Transverse colon (tissue), 4 donors: ENCODE measurements at regions of chr15 and their contacts with region 1.

Region 1: DNA sequence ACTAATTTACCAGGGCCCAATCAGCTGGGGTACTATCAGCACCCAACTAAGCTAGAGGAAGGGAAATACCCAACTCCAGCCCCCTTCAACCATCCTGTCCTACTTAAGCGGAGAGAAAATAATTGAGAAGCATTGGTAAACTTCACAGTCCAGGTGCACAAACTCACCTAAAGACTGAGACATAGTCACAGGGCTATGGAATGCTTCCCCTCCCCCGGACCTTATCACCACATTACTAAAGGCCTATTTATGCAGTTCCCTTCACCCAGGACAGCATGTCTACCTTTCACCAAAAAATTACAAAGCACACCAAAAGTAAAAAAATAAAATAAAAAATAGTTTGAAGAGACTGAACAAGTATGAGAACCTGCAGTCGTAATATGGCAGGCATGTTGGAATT is 47.9 kb downstream of the HOMER2 start:
- DNase-seq: no peak
- H3K4me3 ChIP-seq: no peak overlapping the region
- H3K27ac ChIP-seq: no peak overlapping the region
- H3K4me1 ChIP-seq: no peaks in the 10 kb centered on the region
- H3K27me3 ChIP-seq: no peaks in the 10 kb centered on the region
- CTCF ChIP-seq: no peak
- EP300 ChIP-seq: no peak
- POLR2A ChIP-seq: no peak

Region 2: GRCh38 chr15:82847703-82848102 is 56.9 kb before region 1 on chr15:
- in situ Hi-C with region 1: no loop called
- intact Hi-C with region 1: no loop called
- DNase-seq: no peak
- H3K4me3 ChIP-seq: no peak overlapping the region
- H3K27ac ChIP-seq: no peak overlapping the region
- H3K4me1 ChIP-seq: peaks cover 0 to 11% (median 4%) of the 10 kb centered on the region in 4 donors
- H3K27me3 ChIP-seq: no peaks in the 10 kb centered on the region
- CTCF ChIP-seq: no peak
- EP300 ChIP-seq: no peak
- POLR2A ChIP-seq: no peak

Region 3: GRCh38 chr15:82923744-82924143 is 19.2 kb after region 1 on chr15:
- in situ Hi-C with region 1: no loop called
- intact Hi-C with region 1: no loop called
- DNase-seq: no peak
- H3K4me3 ChIP-seq: no peak overlapping the region
- H3K27ac ChIP-seq: no peak overlapping the region
- H3K4me1 ChIP-seq: no peaks in the 10 kb centered on the region
- H3K27me3 ChIP-seq: no peaks in the 10 kb centered on the region
- CTCF ChIP-seq: no peak
- EP300 ChIP-seq: no peak
- POLR2A ChIP-seq: no peak

Region 4: DNA sequence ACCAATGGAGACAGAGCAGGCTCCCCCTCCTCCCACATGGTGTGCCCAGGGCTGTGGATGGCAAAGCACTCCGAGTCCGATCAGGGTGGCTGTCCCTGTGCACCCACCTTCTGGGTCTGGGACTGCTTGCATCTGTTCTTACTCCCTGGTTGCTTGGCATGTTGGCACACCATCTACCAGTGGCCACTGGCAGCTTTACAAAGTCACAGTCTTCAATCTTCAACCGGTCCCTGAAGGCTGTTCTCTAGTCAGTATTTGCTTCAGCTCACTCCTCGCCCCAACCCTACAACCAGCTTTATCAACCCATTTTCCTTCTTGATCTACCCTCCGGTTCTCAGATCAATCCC is 33.1 kb after region 1 on chr15:
- in situ Hi-C with region 1: no loop called
- intact Hi-C with region 1: loop called (anchors 2 kb)
- DNase-seq: no peak
- H3K4me3 ChIP-seq: no peak overlapping the region
- H3K27ac ChIP-seq: no peak overlapping the region
- H3K4me1 ChIP-seq: no peaks in the 10 kb centered on the region
- H3K27me3 ChIP-seq: no peaks in the 10 kb centered on the region
- CTCF ChIP-seq: no peak
- EP300 ChIP-seq: no peak
- POLR2A ChIP-seq: no peak